CD8-positive, alpha-beta memory T cell (primary cell): ENCODE measurements at regions of chr16 and their contacts with region 1.

Region 1: GRCh38 chr16:3123986-3124886 is 10.6 kb upstream of the ZNF213 start:
- DNase-seq: peak; percentile 95 to 97 (median 96)
- H3K4me3 ChIP-seq: peak overlapping the region; percentile 89
- H3K4me3 Mint-ChIP-seq: peak overlapping the region; percentile 95 to 99 (median 97)
- H3K27ac ChIP-seq: peak overlapping the region; percentile 60
- H3K27ac Mint-ChIP-seq: peak overlapping the region; percentile 88 to 97 (median 96)
- H3K4me1 ChIP-seq: peaks cover 28% of the 10 kb centered on the region
- H3K4me1 Mint-ChIP-seq: peaks cover 35 to 59% (median 45%) of the 10 kb centered on the region in 3 donors
- H3K27me3 ChIP-seq: no peaks in the 10 kb centered on the region
- H3K27me3 Mint-ChIP-seq: no peaks in the 10 kb centered on the region

Region 2: GRCh38 chr16:2795714-2796143 is 328.5 kb before region 1 on chr16:
- CTCF ChIA-PET with region 1: no interaction called
- POLR2A ChIA-PET with region 1: no interaction called
- DNase-seq: peak in 1 of 5 donors; percentile 2
- H3K4me3 ChIP-seq: no peak overlapping the region
- H3K4me3 Mint-ChIP-seq: no peak overlapping the region
- H3K27ac ChIP-seq: no peak overlapping the region
- H3K27ac Mint-ChIP-seq: no peak overlapping the region
- H3K4me1 ChIP-seq: no peaks in the 10 kb centered on the region
- H3K4me1 Mint-ChIP-seq: no peaks in the 10 kb centered on the region
- H3K27me3 ChIP-seq: no peaks in the 10 kb centered on the region
- H3K27me3 Mint-ChIP-seq: peaks cover 19 to 56% of the 10 kb centered on the region in 2 donors

Region 3: GRCh38 chr16:3023669-3024478 is 100.4 kb before region 1 on chr16 and contains the starts of genes HCFC1R1 and THOC6:
- CTCF ChIA-PET with region 1: interaction called, 218 read pairs
- POLR2A ChIA-PET with region 1: interaction called, 3 read pairs
- DNase-seq: peak; percentile 91 to 97 (median 94)
- H3K4me3 ChIP-seq: peak within 1 kb of the TSS; percentile 88
- H3K4me3 Mint-ChIP-seq: peak within 1 kb of the TSS; percentile 87 to 98 (median 93)
- H3K27ac ChIP-seq: peak within 1 kb of the TSS; percentile 88
- H3K27ac Mint-ChIP-seq: peak within 1 kb of the TSS; percentile 78 to 97 (median 96)
- H3K4me1 ChIP-seq: peaks cover 46% of the 10 kb centered on the region
- H3K4me1 Mint-ChIP-seq: peaks cover 42 to 66% (median 48%) of the 10 kb centered on the region in 3 donors
- H3K27me3 ChIP-seq: peaks cover under 1% of the 10 kb centered on the region
- H3K27me3 Mint-ChIP-seq: peaks cover 0 to 3% of the 10 kb centered on the region in 2 donors
- total RNA-seq, gene HCFC1R1: 25.6 to 26.3 TPM
- total RNA-seq, gene THOC6: 56.8 to 59.4 TPM

Region 4: DNA sequence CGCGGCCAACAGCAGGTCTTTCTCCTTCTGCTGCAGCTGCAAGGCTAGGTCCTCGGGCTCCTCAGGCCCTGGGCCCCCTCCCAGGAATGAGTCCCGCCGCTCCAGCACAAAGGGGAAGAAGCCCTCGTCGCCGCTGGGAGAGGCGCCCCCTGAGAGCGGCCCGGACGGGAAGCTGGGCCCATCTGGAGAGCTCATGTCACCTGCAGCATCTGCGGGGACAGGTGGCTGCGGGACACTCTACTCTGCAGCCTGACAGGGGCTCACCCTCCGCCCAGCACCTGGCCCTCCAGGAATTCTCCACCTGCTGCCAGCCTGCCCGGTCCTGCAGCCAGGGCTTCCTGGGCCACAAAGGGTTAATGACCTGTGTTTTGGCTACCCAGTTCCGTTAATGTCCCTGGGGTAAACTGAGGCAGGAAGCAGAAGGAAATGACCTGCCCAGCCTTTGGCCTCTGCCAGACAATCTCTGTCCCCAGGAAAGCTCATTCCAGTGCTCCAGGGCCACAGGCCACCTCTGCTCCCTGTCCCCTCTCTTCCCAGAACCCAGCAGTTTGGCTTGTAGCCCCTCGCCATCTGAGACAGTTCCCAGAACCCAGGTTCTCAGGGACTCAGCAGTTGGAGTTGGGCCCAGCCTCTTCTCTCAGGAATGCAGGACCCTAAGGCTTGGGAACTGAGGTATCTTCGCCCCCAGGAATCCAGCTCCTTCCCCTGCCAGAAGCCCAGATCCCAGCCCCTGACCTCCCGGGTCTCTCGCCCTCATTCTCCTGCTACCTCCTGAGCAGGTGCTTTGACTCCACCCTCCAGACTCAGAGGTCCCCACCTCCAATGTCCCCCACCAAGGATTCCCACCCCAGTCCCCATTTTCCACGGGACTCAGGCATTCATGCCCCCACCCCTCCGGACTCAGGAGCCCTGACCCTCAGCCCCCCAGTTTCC is 88.7 kb before region 1 on chr16:
- CTCF ChIA-PET with region 1: interaction called, 218 read pairs
- POLR2A ChIA-PET with region 1: interaction called, 14 read pairs
- DNase-seq: no peak
- H3K4me3 ChIP-seq: no peak overlapping the region
- H3K4me3 Mint-ChIP-seq: peak overlapping the region in 6 of 7 donors; percentile 3 to 64 (median 34)
- H3K27ac ChIP-seq: no peak overlapping the region
- H3K27ac Mint-ChIP-seq: peak overlapping the region in 2 of 8 donors; percentile 24 to 87
- H3K4me1 ChIP-seq: peaks cover 11% of the 10 kb centered on the region
- H3K4me1 Mint-ChIP-seq: peaks cover 5 to 16% (median 9%) of the 10 kb centered on the region in 3 donors
- H3K27me3 ChIP-seq: peaks cover 64% of the 10 kb centered on the region
- H3K27me3 Mint-ChIP-seq: peaks cover 50 to 67% of the 10 kb centered on the region in 2 donors

Region 5: DNA sequence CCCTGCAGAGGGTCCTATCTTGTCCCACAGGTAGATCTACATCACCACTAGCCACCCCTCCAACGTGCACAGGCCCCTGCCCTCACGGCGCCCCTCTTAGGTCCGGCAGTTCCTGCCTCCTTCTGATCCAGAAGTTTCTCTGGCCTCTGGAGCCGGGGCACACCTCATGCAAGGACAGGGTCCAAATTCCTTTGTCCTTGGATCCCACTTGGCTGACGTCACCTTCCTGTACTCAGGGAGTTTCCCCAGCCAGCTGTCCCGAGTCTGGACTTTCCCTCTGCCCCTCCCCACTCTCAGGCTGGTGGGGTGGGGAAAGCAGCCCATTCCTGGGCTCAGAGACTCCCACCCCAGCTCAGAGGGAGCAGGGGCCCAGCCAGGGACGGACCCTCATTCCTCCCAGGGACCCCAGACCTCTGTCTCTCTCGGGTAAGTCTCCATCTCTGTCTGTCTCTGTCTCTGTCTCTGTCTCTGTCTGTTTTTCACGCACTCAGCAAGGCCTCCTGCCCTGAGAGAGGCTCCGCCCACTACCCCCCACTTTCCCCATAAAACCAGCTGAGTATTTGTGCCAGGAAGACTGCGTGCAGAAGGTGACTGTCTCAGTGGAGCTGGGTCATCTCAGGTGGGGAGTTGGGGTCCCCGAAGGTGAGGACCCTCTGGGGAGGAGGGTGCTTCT is 59.0 kb before region 1 on chr16 and contains the start of gene IL32:
- CTCF ChIA-PET with region 1: interaction called, 190 read pairs
- POLR2A ChIA-PET with region 1: interaction called, 28 read pairs
- DNase-seq: peak; percentile 44 to 74 (median 65)
- H3K4me3 ChIP-seq: peak within 1 kb of the TSS; percentile 92
- H3K4me3 Mint-ChIP-seq: peak within 1 kb of the TSS; percentile 98 to 100 (median 100)
- H3K27ac ChIP-seq: peak within 1 kb of the TSS; percentile 81
- H3K27ac Mint-ChIP-seq: peak within 1 kb of the TSS; percentile 88 to 99 (median 96)
- H3K4me1 ChIP-seq: peaks cover 54% of the 10 kb centered on the region
- H3K4me1 Mint-ChIP-seq: peaks cover 49 to 74% (median 68%) of the 10 kb centered on the region in 3 donors
- H3K27me3 ChIP-seq: no peaks in the 10 kb centered on the region
- H3K27me3 Mint-ChIP-seq: no peaks in the 10 kb centered on the region
- total RNA-seq, gene IL32: 975 to 992 TPM

Region 6: GRCh38 chr16:3106205-3106928 is 17.9 kb before region 1 on chr16:
- CTCF ChIA-PET with region 1: interaction called, 278 read pairs
- POLR2A ChIA-PET with region 1: interaction called, 4 read pairs
- DNase-seq: peak; percentile 83 to 95 (median 88)
- H3K4me3 ChIP-seq: peak overlapping the region; percentile 75
- H3K4me3 Mint-ChIP-seq: peak overlapping the region; percentile 86 to 93 (median 88)
- H3K27ac ChIP-seq: peak overlapping the region; percentile 72
- H3K27ac Mint-ChIP-seq: peak overlapping the region; percentile 73 to 95 (median 91)
- H3K4me1 ChIP-seq: peaks cover 21% of the 10 kb centered on the region
- H3K4me1 Mint-ChIP-seq: peaks cover 23 to 29% (median 24%) of the 10 kb centered on the region in 3 donors
- H3K27me3 ChIP-seq: no peaks in the 10 kb centered on the region
- H3K27me3 Mint-ChIP-seq: no peaks in the 10 kb centered on the region

Region 7: DNA sequence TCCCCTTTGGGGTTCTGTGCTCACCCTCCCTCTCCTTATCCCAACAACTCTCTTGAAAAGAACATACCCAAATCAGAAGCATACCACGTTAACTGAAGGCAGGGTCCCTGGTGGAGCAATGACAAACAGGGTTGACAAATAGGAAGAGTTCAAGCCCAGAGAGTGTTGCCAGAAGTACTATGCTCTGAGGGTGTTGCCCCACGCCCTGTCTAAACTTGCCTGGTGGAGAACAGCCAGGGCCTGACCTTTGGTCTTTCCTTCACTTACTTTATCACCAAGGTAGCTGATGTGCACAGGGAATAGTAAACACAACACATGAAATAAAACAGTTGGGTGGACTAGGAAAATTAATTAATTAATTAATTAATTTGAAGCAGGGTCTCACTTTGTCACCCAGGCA is 204.4 kb after region 1 on chr16:
- CTCF ChIA-PET with region 1: no interaction called
- POLR2A ChIA-PET with region 1: no interaction called
- DNase-seq: no peak
- H3K4me3 ChIP-seq: no peak overlapping the region
- H3K4me3 Mint-ChIP-seq: no peak overlapping the region
- H3K27ac ChIP-seq: no peak overlapping the region
- H3K27ac Mint-ChIP-seq: no peak overlapping the region
- H3K4me1 ChIP-seq: no peaks in the 10 kb centered on the region
- H3K4me1 Mint-ChIP-seq: no peaks in the 10 kb centered on the region
- H3K27me3 ChIP-seq: no peaks in the 10 kb centered on the region
- H3K27me3 Mint-ChIP-seq: no peaks in the 10 kb centered on the region